Caco-2 (cell line): ENCODE measurements at regions of chr12 and their contacts with region 1.

Region 1: DNA sequence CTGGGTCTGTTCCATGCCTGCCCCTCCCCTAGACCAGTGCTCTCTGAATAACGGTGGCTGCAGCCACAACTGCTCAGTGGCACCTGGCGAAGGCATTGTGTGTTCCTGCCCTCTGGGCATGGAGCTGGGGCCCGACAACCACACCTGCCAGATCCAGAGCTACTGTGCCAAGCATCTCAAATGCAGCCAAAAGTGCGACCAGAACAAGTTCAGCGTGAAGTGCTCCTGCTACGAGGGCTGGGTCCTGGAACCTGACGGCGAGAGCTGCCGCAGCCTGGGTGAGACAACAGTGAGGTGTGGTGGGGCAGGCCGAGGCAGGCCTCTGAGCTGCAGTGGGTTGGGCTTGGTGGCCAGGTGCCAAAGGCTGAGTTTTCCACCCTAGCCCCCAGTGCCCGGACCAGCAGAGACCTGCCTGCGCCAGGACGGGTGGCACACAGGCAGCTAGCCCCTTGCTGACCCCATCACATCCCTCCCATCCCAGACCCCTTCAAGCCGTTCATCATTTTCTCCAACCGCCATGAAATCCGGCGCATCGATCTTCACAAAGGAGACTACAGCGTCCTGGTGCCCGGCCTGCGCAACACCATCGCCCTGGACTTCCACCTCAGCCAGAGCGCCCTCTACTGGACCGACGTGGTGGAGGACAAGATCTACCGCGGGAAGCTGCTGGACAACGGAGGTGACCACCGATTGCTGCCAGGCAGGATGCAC is 28.2 kb upstream of the LRP1-AS start:
- DNase-seq: peak; percentile 55 to 75
- H3K4me3 ChIP-seq: no peak overlapping the region
- H3K4me3 Mint-ChIP-seq: no peak overlapping the region
- H3K27ac Mint-ChIP-seq: no peak overlapping the region
- H3K4me1 ChIP-seq: no peaks in the 10 kb centered on the region
- H3K4me1 Mint-ChIP-seq: no peaks in the 10 kb centered on the region
- H3K27me3 ChIP-seq: no peaks in the 10 kb centered on the region
- H3K27me3 Mint-ChIP-seq: no peaks in the 10 kb centered on the region
- CTCF ChIP-seq: peak; percentile 61 to 63

Region 2: DNA sequence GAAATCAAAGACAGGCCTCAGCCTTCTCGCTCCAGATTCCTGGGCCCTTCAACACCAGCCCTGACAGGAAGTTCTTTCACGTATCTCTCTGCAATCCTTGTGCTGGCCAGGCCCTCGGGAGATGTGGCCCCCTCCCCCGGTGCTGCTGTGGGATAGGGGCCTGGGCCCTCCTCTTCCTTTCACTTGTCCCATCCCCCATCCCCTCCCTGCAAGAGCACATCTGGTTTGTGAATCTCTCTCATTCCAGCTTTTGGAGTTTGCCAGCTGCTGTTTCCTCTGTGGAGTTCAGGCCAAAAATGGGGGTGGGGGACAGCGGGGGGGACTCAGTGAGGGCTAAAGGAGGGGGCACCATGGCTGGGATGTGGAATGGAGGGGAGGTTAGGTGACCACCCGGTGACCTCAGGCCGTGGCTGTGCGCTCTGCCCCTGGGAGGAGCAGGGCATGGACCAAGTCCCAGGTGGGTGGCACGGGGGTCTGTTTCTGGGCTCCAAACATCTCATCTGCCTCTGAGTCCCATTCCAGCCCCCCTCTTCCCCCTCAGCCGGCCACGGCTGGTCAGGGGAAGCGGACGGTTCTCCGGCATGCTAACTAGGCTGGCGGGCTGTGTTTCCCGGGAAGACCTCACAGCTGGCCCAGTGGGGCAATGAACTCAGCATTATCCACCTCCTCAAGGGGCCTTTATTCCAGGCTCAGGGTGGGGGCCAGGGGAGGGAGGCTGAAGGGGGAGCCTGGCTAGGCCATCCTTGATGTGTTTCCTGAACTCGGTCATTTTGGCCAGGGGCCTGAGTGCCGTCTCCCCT is 39.9 kb before region 1 on chr12:
- CTCF ChIA-PET with region 1: interaction called, 4 read pairs
- POLR2A ChIA-PET with region 1: interaction called, 10 read pairs
- intact Hi-C with region 1: no loop called
- DNase-seq: no peak
- H3K4me3 ChIP-seq: no peak overlapping the region
- H3K4me3 Mint-ChIP-seq: no peak overlapping the region
- H3K27ac Mint-ChIP-seq: no peak overlapping the region
- H3K4me1 ChIP-seq: peaks cover 52% of the 10 kb centered on the region
- H3K4me1 Mint-ChIP-seq: peaks cover 60% of the 10 kb centered on the region
- H3K27me3 ChIP-seq: no peaks in the 10 kb centered on the region
- H3K27me3 Mint-ChIP-seq: no peaks in the 10 kb centered on the region
- CTCF ChIP-seq: no peak

Region 3: GRCh38 chr12:57148469-57149244 is 26.9 kb before region 1 on chr12:
- CTCF ChIA-PET with region 1: interaction called, 6 read pairs
- POLR2A ChIA-PET with region 1: no interaction called
- intact Hi-C with region 1: loop called (anchors 1 kb)
- DNase-seq: peak; percentile 56 to 60
- H3K4me3 ChIP-seq: no peak overlapping the region
- H3K4me3 Mint-ChIP-seq: peak overlapping the region; percentile 17
- H3K27ac Mint-ChIP-seq: peak overlapping the region; percentile 97
- H3K4me1 ChIP-seq: peaks cover 44% of the 10 kb centered on the region
- H3K4me1 Mint-ChIP-seq: peaks cover 51% of the 10 kb centered on the region
- H3K27me3 ChIP-seq: no peaks in the 10 kb centered on the region
- H3K27me3 Mint-ChIP-seq: no peaks in the 10 kb centered on the region
- CTCF ChIP-seq: no peak